PC-9 (cell line): ENCODE measurements at regions of chr10 and their contacts with region 1.

Region 1: DNA sequence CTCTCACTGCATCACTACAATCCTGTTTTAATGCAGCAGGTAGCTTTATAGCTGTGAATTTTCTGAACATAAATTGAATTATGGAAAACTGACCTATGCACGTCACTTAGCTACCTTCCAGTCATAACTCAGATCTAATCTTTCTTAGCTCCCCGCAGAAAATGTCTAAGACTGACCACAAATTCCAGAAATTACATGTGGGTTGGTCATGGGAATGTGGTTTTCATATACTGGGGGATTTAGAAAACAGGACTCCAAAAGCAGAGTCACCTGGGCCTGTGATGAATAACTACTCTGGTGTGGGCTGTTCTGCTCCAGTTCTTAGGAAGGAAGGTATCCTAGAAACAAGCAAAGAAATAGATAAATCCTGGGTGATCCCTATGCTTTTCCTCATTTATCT is 178.4 kb upstream of the LRRTM3 start:
- DNase-seq: peak; percentile 43 to 56
- H3K4me3 ChIP-seq: no peak overlapping the region
- H3K27ac ChIP-seq: no peak overlapping the region
- H3K4me1 ChIP-seq: no peaks in the 10 kb centered on the region
- H3K27me3 ChIP-seq: no peaks in the 10 kb centered on the region
- CTCF ChIP-seq: no peak

Region 2: DNA sequence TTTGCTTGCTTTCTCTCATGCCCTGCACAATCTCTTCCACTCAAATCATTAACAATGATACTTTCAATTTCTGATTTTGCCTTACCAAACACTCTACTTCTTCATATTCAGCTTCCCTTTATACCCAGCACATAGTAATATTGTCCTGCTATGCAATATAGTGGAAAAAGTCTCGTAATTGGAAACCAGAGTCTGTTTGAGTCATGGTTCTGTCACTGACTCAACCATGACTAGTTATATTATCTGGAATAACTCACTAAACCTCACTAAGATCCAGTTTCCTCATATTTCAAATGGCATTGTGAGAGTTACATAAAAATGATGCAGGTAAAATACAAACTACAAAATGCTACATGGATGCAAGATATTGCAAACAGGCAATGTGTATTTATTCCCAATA is 79.9 kb after region 1 on chr10:
- CTCF ChIA-PET with region 1: no interaction called
- POLR2A ChIA-PET with region 1: no interaction called
- intact Hi-C with region 1: loop called (anchors 1 kb)
- DNase-seq: peak in 1 of 2 experiments; percentile 46
- H3K4me3 ChIP-seq: no peak overlapping the region
- H3K27ac ChIP-seq: no peak overlapping the region
- H3K4me1 ChIP-seq: no peaks in the 10 kb centered on the region
- H3K27me3 ChIP-seq: no peaks in the 10 kb centered on the region
- CTCF ChIP-seq: no peak

Region 3: DNA sequence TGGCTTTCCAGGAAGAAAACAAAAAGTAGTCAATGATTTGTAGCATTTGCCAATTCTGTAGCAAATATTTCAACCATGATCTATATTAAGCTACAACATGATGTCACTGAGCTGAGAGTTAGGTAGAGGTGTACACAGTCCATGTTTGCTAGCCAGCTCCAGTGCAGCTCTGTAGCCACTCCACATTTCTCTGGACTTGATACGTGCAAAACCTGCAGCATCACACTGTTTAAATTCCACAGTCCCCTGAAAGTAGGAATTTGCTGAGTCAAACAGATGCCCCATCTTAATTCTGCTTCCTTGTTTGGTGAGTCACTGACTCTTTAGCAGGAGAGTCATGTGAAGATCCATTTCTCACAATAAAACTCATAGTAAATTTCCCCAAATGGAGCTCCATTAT is 88.6 kb after region 1 on chr10:
- CTCF ChIA-PET with region 1: interaction called, 9 read pairs
- POLR2A ChIA-PET with region 1: no interaction called
- intact Hi-C with region 1: loop called (anchors 2 kb)
- DNase-seq: peak; percentile 32 to 70
- H3K4me3 ChIP-seq: no peak overlapping the region
- H3K27ac ChIP-seq: no peak overlapping the region
- H3K4me1 ChIP-seq: no peaks in the 10 kb centered on the region
- H3K27me3 ChIP-seq: no peaks in the 10 kb centered on the region
- CTCF ChIP-seq: no peak